GM23248 (cell line): ENCODE measurements at regions of chr16 and their contacts with region 1.

Region 1: DNA sequence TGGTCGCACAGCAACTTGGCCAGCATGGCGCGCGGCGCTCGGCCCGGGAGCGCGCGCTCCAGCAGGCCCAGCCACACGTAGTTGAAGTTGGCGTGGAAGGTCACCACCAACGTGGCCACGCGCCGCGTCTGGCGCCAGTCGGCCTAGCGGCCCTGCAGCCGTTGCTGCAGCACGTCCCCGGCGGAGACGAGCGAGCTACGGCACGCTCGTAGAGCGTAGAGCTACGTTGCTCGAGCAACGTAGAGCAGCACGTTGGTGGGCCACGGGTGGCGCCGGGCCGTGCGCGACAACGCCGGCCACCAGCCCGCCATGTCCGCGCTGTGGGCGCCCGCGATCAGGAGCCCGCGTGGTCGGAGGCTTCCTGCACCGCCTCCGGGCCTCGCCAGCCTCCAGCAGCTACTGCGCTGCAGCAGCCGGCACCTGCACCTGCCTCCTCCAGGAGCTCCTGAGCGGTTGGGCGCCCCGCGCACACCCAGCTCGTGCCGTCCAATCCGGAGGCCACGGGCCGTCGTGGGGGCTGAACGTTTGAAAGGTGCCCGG is 13.4 kb upstream of the SULT1A1 start:
- DNase-seq: peak; percentile 53
- H3K4me3 ChIP-seq: peak overlapping the region; percentile 42
- H3K27ac ChIP-seq: no peak overlapping the region
- H3K4me1 ChIP-seq: no peaks in the 10 kb centered on the region
- H3K27me3 ChIP-seq: no peaks in the 10 kb centered on the region; the same call in 1 of the 2 replicates

Region 2: DNA sequence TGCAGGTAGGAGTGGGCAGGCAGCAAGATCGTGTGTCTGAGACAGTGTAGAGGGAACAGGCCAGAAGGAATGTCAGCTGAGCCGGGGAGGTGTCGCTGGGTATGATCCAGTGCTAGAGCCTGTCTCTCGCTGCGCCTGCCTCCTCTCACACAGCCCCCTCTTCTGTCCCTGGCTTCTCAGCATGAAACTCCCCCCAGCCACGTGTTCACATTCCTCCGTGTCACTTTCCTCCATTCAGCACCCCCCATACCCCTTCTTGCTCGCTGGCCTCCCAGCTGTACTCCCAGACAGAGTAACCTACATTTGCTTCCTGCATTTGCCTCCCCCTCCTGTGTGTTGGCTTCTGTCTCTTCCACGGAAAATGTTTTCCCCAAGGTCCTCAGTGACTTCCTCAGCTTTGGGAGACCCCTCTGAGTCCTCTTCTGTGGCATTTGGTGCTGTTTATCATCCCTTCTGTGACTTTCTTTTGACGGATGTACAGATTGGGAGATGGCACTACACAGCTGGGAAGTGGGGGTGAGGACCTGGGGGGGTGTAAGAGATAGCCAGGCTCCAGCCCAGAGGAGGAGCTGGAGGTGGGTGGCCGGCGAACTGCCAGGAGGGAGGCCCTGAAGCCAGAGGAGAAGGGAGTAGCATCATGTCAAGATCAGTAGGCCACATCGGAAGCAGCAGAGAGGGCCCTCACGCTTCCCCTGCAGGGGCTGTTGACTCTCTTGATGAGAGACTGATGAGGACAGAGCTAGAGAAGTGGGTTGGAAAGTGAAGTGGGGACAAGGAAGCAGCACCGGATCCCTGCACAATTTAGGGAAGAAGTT is 50.3 kb before region 1 on chr16:
- in situ Hi-C with region 1: loop called (anchors 10 kb)
- DNase-seq: peak; percentile 19
- H3K4me3 ChIP-seq: no peak overlapping the region
- H3K27ac ChIP-seq: no peak overlapping the region
- H3K4me1 ChIP-seq: no peaks in the 10 kb centered on the region
- H3K27me3 ChIP-seq: no peaks in the 10 kb centered on the region

Region 3: DNA sequence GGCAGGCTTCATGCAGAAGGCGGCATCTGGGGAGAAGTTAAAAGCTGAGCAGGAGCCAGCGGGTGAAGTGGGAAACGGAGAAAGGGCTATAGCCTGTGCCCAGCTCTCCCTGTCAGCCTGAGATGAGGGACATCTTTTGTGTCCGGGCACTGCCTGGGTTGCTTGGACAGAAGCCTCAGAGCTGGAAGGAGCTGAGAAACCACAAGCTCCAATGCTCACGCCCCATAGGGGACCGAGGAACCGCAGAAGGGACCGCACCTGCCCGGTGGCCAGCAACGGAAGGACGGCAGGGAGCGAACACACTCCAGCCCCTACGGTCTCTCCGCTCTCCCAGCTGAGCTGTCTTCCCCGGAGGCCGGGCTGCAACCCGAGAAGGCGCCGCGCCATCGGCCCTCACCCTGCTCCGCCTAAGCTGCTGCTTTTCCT is 607.4 kb after region 1 on chr16:
- in situ Hi-C with region 1: no loop called
- DNase-seq: peak; percentile 62
- H3K4me3 ChIP-seq: no peak overlapping the region
- H3K27ac ChIP-seq: 0 out of 2 replicates have a peak overlapping the region, but pooled peaks have one; percentile 17
- H3K4me1 ChIP-seq: no peaks in the 10 kb centered on the region; the same call in 1 of the 2 replicates
- H3K27me3 ChIP-seq: no peaks in the 10 kb centered on the region